ENCODE measurements at regions of chr4 and their contacts with region 1.

Region 1: GRCh38 chr4:184825896-184826690 is at the start of gene ACSL1:
- DNase-seq: no peak
- ATAC-seq: peak; percentile 70
- H3K4me3 ChIP-seq: peak within 1 kb of the TSS; percentile 77
- H3K27ac ChIP-seq: peak within 1 kb of the TSS; percentile 90
- H3K4me1 ChIP-seq: peaks cover 22% of the 10 kb centered on the region
- H3K27me3 ChIP-seq: no peaks in the 10 kb centered on the region
- CTCF ChIP-seq: 0 out of 6 replicates have a peak, but pooled peaks of 1 of the 3 experiments have one; percentile 4
- EP300 ChIP-seq: no peak
- POLR2A ChIP-seq: peak; percentile 88
- RAD21 ChIP-seq: no peak
- polyA plus RNA-seq, gene ACSL1: 30.7 to 32.6 TPM

Region 2: DNA sequence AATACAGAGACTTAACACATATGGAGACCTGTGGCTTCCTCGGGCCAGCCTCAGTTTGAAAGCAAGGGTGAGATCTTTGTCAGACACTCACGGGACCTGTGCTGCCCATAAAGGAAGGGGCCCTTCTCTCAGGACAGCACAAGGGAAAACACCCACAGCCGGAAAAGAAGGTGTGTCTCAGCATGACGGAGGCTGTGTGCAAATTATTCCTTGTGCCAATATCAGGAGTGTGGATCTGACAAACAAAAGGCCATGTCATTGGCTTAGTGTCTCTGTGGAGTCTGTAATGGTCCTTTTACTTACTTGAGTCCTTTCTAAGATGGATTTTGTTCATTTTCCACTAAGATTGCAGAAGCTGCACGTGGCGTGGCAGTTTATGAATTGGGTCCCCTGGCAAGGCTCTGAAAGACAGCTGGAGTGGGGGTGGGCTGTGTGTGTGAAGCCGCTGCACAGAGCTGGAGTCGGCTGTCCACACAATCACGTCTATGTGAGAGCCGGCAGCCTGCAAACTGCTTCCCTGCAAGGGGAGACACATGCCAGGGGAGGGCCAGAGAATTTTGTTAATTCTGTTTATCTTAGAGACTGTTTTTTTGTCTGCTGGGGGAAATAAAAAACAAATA is 610.3 kb before region 1 on chr4:
- CTCF ChIA-PET with region 1: no interaction called
- POLR2A ChIA-PET with region 1: no interaction called
- RAD21 ChIA-PET with region 1: no interaction called
- SMC1A ChIA-PET with region 1: no interaction called
- in situ Hi-C with region 1: no loop called
- intact Hi-C with region 1: no loop called
- DNase-seq: no peak
- ATAC-seq: no peak
- H3K4me3 ChIP-seq: no peak overlapping the region
- H3K27ac ChIP-seq: no peak overlapping the region
- H3K4me1 ChIP-seq: no peaks in the 10 kb centered on the region
- H3K27me3 ChIP-seq: no peaks in the 10 kb centered on the region
- CTCF ChIP-seq: no peak
- EP300 ChIP-seq: no peak
- POLR2A ChIP-seq: no peak
- RAD21 ChIP-seq: no peak

Region 3: GRCh38 chr4:184733654-184734524 is 92.2 kb before region 1 on chr4 and contains the start of gene CENPU:
- CTCF ChIA-PET with region 1: interaction called, 3 read pairs
- POLR2A ChIA-PET with region 1: interaction called, 3 read pairs
- RAD21 ChIA-PET with region 1: interaction called, 3 read pairs
- SMC1A ChIA-PET with region 1: interaction called, 4 read pairs
- in situ Hi-C with region 1: no loop called
- intact Hi-C with region 1: loop called (anchors 5 kb)
- DNase-seq: peak; percentile 94
- ATAC-seq: peak; percentile 93
- H3K4me3 ChIP-seq: peak within 1 kb of the TSS; percentile 91
- H3K27ac ChIP-seq: peak within 1 kb of the TSS; percentile 81
- H3K4me1 ChIP-seq: peaks cover 9% of the 10 kb centered on the region
- H3K27me3 ChIP-seq: no peaks in the 10 kb centered on the region
- CTCF ChIP-seq: no peak
- EP300 ChIP-seq: no peak
- POLR2A ChIP-seq: peak; percentile 91
- RAD21 ChIP-seq: 0 out of 2 replicates have a peak, but pooled peaks have one; percentile 22
- polyA plus RNA-seq, gene CENPU: 26.6 to 46.5 TPM

Region 4: GRCh38 chr4:184860018-184860779 is 34.1 kb after region 1 on chr4:
- CTCF ChIA-PET with region 1: interaction called, 3 read pairs
- POLR2A ChIA-PET with region 1: interaction called, 6 read pairs
- RAD21 ChIA-PET with region 1: interaction called, 7 read pairs
- SMC1A ChIA-PET with region 1: interaction called, 18 read pairs
- in situ Hi-C with region 1: no loop called
- intact Hi-C with region 1: loop called (anchors 5 kb)
- DNase-seq: peak; percentile 65
- ATAC-seq: peak; percentile 85
- H3K4me3 ChIP-seq: 0 out of 2 replicates have a peak overlapping the region, but pooled peaks have one; percentile 19
- H3K27ac ChIP-seq: peak overlapping the region; percentile 68
- H3K4me1 ChIP-seq: peaks cover 45% of the 10 kb centered on the region
- H3K27me3 ChIP-seq: no peaks in the 10 kb centered on the region
- CTCF ChIP-seq: no peak
- EP300 ChIP-seq: peak; percentile 17 to 57; a peak in 2 of 4 replicates
- POLR2A ChIP-seq: no peak
- RAD21 ChIP-seq: no peak

Measured in GM12878 (cell line).